Endothelial cell of umbilical vein (primary cell): ENCODE measurements at regions of chr5 and their contacts with region 1.

Region 1: DNA sequence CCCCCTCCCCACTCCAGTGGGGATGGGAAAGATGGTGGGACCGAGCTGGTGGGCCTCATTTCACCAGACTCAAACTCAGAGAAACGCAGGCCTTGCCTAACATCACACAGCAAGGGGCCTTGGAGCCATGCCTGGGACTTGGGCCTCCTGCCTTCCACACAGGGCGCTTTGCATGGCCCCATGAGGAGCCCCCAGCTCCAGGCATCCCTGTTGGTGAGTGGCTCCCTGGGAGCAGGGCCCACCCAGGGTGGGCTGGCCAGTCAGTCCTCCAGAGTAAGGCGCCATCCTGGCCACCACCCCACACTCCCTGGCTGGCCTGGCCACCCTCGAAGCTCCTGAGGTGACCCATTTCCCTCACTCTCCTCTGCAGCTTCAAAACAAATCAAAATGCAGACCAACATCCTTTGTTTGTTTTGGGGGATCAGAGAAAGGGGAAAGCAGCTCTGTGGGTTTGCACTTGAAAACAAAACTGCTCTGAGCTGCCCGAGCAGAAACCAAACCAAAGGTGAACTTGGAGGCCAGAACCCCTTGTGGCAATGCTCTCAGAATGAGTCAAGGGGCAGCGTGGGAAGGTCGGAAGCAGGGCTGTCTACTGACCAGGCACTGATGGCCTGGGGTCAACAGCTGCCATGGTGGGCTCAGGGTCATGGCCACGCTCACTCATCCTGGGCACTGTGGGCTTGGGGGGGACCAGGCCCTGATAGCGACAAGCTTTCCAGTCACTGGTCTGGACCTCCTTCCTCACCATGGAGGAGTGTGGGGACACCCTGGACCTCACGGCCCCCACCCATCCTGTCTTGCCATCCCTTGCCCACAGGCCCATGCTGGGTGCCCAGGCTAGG is 37.0 kb upstream of the VDAC1 start:
- DNase-seq: no peak
- H3K4me3 ChIP-seq: no peak overlapping the region
- H3K27ac ChIP-seq: no peak overlapping the region
- H3K4me1 ChIP-seq: no peaks in the 10 kb centered on the region
- H3K27me3 ChIP-seq: no peaks in the 10 kb centered on the region
- CTCF ChIP-seq: no peak
- POLR2A ChIP-seq: no peak

Region 2: DNA sequence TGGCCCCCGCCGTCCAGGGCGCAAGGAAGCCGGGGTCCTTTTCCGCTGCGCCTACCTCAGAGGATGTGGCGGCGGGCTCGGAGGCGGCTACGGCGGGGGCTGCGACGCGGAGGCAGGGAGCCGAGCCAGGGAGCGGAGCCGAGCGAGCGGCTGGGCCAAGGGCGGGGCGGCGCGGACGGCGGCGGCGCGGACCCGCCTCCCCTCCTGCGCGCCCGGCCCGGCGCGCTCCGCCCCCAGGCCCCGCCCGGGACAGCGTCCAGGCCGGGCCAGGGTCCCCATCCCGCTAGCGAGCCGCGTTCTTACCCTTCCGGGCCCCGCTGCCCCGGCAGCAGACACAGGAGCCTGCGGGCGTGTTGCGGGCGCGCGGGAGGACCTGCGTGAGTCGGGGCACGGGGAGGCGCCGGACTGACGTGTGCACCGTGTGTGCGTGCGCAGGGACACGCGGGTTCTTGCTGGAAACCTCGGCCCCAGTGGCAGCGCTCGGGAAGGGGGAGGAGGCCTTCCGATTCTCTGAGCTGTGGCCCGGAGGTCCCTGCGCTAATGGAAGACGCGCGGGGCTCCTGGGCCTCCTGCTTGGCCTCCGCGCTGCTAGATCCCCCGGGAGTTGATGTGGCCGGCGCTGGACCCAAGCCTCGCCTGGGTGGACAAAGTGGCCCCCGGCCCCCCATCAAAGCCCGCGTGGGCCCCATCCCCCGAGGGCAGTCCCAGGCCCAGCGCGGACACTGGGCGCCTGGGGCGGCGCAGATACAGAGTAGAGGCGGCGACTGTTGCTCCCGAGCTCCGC is 37.0 kb before region 1 on chr5 and contains the start of gene VDAC1:
- CTCF ChIA-PET with region 1: interaction called, 43 read pairs
- POLR2A ChIA-PET with region 1: no interaction called
- dilution Hi-C with region 1: no loop called
- intact Hi-C with region 1: loop called (anchors 2 kb)
- DNase-seq: peak; percentile 85
- H3K4me3 ChIP-seq: peak within 1 kb of the TSS; percentile 48 to 95 (median 95)
- H3K27ac ChIP-seq: peak within 1 kb of the TSS; percentile 93
- H3K4me1 ChIP-seq: peaks cover 21% of the 10 kb centered on the region
- H3K27me3 ChIP-seq: no peaks in the 10 kb centered on the region
- CTCF ChIP-seq: no peak
- POLR2A ChIP-seq: peak; percentile 88
- total RNA-seq, gene VDAC1: 247 and 253 TPM in 2 replicates

Region 3: DNA sequence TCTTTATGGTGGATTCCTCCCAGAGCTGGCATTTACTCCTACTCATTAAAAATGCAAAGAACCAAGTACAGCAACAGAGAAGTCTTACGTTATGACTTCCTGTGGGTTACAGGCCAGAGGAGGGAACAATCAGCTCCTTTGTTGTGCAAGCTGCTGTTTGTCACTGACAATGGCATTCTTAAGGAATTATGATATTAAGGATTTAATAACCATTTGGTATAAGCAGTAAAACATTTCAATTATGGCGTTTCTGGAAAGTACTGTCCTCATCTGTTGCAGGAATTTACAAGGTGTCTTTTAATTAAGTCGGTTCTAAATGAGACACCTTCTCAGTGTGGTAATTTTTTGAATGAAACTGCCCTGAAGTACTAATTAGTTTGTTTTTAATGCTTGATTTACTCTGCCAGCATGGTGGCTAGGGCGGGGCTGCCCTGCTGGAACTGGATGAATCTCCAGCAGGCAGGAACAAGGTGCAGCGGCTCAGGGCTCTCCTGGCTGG is 12.1 kb after region 1 on chr5:
- CTCF ChIA-PET with region 1: interaction called, 57 read pairs
- POLR2A ChIA-PET with region 1: no interaction called
- dilution Hi-C with region 1: no loop called
- intact Hi-C with region 1: no loop called
- DNase-seq: no peak
- H3K4me3 ChIP-seq: no peak overlapping the region
- H3K27ac ChIP-seq: no peak overlapping the region
- H3K4me1 ChIP-seq: no peaks in the 10 kb centered on the region
- H3K27me3 ChIP-seq: peaks cover 0 to 4% of the 10 kb centered on the region in 2 experiments
- CTCF ChIP-seq: no peak
- POLR2A ChIP-seq: no peak

Region 4: DNA sequence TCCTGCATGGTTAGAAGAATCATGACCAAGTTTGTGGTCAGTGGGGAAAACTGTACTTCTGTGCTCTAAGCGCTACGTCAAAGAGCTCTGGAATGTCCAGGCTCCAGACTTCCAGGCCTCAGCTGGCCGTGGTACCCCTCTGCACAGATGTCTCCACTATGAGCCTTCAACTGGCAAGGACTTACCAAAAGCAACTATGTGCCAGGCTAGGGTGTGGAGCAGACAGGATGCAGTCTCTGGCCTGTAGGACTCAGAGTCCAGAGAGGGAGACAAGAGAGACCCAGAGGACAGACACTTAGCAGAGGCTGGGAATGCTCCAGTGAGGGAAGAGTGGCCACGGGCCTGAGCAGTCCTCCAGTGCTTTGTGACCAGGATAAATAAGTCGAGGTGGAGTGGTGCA is 41.7 kb after region 1 on chr5:
- CTCF ChIA-PET with region 1: interaction called, 24 read pairs
- POLR2A ChIA-PET with region 1: no interaction called
- dilution Hi-C with region 1: no loop called
- intact Hi-C with region 1: no loop called
- DNase-seq: no peak
- H3K4me3 ChIP-seq: no peak overlapping the region
- H3K27ac ChIP-seq: no peak overlapping the region
- H3K4me1 ChIP-seq: no peaks in the 10 kb centered on the region
- H3K27me3 ChIP-seq: peaks cover 4 to 5% of the 10 kb centered on the region in 2 experiments
- CTCF ChIP-seq: no peak
- POLR2A ChIP-seq: no peak

Region 5: GRCh38 chr5:134113902-134114875 is 72.4 kb after region 1 on chr5 and contains the start of gene TCF7:
- CTCF ChIA-PET with region 1: interaction called, 43 read pairs
- POLR2A ChIA-PET with region 1: no interaction called
- dilution Hi-C with region 1: no loop called
- intact Hi-C with region 1: no loop called
- DNase-seq: peak; percentile 59
- H3K4me3 ChIP-seq: peak within 1 kb of the TSS; percentile 44 to 74 (median 72)
- H3K27ac ChIP-seq: no peak within 1 kb of the TSS
- H3K4me1 ChIP-seq: peaks cover 9% of the 10 kb centered on the region
- H3K27me3 ChIP-seq: peaks cover 16% of the 10 kb centered on the region in 2 experiments
- CTCF ChIP-seq: no peak
- POLR2A ChIP-seq: no peak
- total RNA-seq, gene TCF7: 2.3 and 2.5 TPM in 2 replicates

Region 6: GRCh38 chr5:134140530-134141201 is 98.9 kb after region 1 on chr5:
- CTCF ChIA-PET with region 1: interaction called, 517 read pairs
- POLR2A ChIA-PET with region 1: interaction called, 3 read pairs
- dilution Hi-C with region 1: no loop called
- intact Hi-C with region 1: loop called (anchors 1 kb)
- DNase-seq: peak; percentile 63
- H3K4me3 ChIP-seq: no peak overlapping the region
- H3K27ac ChIP-seq: no peak overlapping the region
- H3K4me1 ChIP-seq: no peaks in the 10 kb centered on the region
- H3K27me3 ChIP-seq: no peaks in the 10 kb centered on the region
- CTCF ChIP-seq: peak; percentile 75 to 82
- POLR2A ChIP-seq: no peak

Region 7: GRCh38 chr5:134267366-134268018 is 225.7 kb after region 1 on chr5:
- CTCF ChIA-PET with region 1: no interaction called
- POLR2A ChIA-PET with region 1: no interaction called
- dilution Hi-C with region 1: no loop called
- intact Hi-C with region 1: no loop called
- DNase-seq: no peak
- H3K4me3 ChIP-seq: no peak overlapping the region
- H3K27ac ChIP-seq: no peak overlapping the region
- H3K4me1 ChIP-seq: no peaks in the 10 kb centered on the region
- H3K27me3 ChIP-seq: peaks cover 2 to 21% of the 10 kb centered on the region in 2 experiments
- CTCF ChIP-seq: no peak
- POLR2A ChIP-seq: no peak